ENCODE measurements at regions of chr19 and their contacts with region 1.

Region 1: DNA sequence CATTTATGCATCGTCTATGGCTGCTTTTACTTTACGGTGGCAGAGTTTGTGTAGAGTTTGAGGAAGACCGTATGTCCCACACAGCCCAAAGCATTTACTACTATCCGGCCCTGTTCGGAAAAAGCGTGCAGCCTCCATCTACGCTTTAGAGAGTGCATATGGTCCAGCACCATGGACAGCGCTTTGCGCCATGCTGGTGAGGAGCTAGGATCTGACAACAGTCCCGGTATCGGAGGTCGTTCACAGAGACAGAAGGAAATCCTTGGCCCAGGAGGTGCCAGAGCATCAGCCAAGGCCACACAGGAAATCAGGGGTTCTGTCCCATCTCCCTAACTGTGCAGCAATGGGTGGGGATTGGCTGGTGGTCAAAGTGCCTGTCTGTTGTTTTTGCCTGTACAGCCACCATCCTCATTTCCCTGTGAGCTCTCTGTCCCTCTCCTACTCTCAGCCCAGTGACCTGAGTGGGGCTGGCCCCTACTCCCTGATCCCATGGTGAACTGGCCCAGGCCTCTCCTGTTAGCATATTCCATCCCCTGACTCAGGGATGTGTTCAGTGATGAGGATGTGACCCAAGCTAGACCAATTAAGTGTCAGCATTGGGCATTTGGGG is 16.2 kb upstream of the PRODH2 start:
- DNase-seq: peak; percentile 67
- CTCF ChIP-seq: no peak

Region 2: DNA sequence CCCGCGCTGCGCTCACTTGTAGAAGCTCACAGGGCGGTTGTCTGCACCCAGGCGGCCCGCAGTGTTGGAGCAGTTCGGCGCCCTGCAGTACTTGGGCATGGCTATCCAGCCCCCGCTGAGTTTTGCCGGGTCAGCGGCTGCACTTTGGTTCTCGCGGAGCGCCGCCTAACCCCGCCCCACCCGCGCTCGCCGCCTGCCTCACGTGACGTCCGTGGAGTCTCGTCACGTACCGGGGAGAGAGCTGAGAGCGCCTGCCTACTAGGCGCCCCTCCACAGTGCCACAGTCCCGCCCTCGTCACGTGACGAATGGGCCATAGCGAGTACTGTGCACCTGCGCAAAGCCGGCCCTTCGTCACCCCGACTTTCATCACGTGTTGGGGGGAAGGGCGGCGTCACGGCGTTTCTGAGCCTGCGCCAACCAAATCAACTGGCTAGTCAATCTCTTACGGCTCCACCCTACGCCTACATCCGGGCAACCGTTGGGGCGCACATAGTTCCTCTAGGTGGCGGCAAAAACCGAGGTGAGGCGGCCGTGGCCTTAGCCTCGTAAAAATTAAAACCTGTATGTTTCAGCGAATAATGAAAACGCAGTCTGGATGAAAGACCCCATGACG is 225.4 kb after region 1 on chr19 and contains the start of gene THAP8:
- CTCF ChIA-PET with region 1: no interaction called
- POLR2A ChIA-PET with region 1: interaction called, 12 read pairs
- DNase-seq: peak; percentile 100
- CTCF ChIP-seq: peak; percentile 30

Measured in GM10248 (cell line).